Naive thymus-derived CD4-positive, alpha-beta T cell (primary cell): ENCODE measurements at regions of chr2 and their contacts with region 1.

Region 1: DNA sequence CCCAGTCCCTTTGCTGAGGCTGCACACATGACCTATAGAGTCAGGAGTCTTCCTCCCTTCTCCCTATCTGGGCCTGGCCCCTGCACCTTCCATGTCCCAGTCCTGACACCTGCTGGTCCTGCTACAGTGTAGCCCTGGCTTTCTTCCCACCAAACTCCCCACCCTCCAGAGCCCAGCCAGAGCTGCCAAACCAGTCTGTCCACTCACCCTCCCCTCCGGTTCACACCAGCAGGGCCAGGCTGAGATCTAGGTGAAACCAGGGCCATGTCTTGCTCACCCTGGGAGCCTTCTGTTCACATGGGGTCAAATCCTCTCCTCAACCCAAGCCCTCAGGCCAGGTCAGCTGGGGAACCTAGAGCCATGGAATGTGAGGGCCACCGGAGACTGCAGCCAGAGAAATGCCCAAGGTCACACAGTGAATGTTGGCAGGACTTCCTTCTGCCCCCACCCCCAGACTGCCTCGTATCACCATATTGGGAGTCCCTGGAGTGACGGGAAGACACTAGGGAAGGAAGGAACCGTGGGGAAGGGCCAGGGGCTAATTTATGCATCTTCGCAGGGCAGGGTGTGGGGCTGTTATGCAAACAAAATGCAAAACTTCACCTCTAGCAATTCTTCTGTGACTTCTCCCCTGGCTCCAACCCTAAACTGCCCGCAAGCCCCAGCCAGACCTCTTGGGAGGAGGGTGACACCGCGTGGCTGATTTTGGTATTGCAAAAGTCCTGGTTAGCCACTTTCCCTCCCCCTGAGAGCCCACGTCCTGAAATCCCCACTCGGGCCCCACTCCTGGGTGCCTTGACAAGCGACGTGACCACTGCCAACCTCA is 14.6 kb downstream of the TNS1 start:
- DNase-seq: peak in 7 of 9 donors; percentile 14 to 74 (median 31)
- ATAC-seq: peak; percentile 77
- H3K4me3 ChIP-seq: no peak overlapping the region
- H3K4me3 Mint-ChIP-seq: no peak overlapping the region
- H3K27ac ChIP-seq: no peak overlapping the region
- H3K27ac Mint-ChIP-seq: no peak overlapping the region
- H3K4me1 ChIP-seq: no peaks in the 10 kb centered on the region
- H3K4me1 Mint-ChIP-seq: peaks cover 0 to 10% (median 0%) of the 10 kb centered on the region in 7 donors
- H3K27me3 ChIP-seq: no peaks in the 10 kb centered on the region
- H3K27me3 Mint-ChIP-seq: peaks cover 2 to 11% (median 7%) of the 10 kb centered on the region in 5 donors

Region 2: DNA sequence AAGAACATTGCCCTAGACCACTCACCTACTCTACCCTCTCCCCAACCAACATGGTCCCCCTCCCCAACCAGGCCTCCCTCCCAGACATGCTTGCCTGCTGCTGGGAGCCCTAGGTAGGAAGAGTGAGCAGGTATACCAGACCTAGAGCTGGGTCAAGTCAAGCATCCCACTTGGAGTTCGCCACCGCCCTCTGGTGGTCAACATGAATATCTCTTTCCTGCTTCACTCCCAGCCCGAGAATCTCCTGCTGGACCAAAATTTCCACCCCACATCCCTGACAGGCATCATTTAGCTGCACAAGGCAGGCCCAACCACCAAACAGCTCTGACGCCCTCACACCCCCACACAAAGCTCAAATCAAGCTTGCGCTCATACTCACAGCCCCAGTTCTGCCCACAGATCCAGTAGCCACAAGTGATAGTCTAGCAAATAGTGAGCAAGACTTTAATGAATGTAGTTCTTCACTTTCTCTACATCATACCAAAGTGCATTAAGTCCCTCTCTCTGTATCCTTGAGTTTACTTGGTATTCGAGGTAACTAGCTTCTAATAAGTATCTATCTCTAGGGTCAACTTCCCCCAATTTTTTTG is 101.4 kb before region 1 on chr2:
- CTCF ChIA-PET with region 1: no interaction called
- POLR2A ChIA-PET with region 1: no interaction called
- intact Hi-C with region 1: loop called in 1 of 2 experiments (anchors 1 kb)
- DNase-seq: peak; percentile 11 to 58 (median 41)
- ATAC-seq: peak; percentile 69
- H3K4me3 ChIP-seq: no peak overlapping the region
- H3K4me3 Mint-ChIP-seq: no peak overlapping the region
- H3K27ac ChIP-seq: no peak overlapping the region
- H3K27ac Mint-ChIP-seq: no peak overlapping the region
- H3K4me1 ChIP-seq: no peaks in the 10 kb centered on the region
- H3K4me1 Mint-ChIP-seq: peaks cover 0 to 4% (median 0%) of the 10 kb centered on the region in 7 donors
- H3K27me3 ChIP-seq: no peaks in the 10 kb centered on the region
- H3K27me3 Mint-ChIP-seq: peaks cover 0 to 9% (median 0%) of the 10 kb centered on the region in 5 donors

Region 3: GRCh38 chr2:217899231-217900009 is 88.8 kb before region 1 on chr2:
- CTCF ChIA-PET with region 1: no interaction called
- POLR2A ChIA-PET with region 1: no interaction called
- intact Hi-C with region 1: no loop called
- DNase-seq: no peak
- ATAC-seq: peak; percentile 56
- H3K4me3 ChIP-seq: no peak overlapping the region
- H3K4me3 Mint-ChIP-seq: no peak overlapping the region
- H3K27ac ChIP-seq: no peak overlapping the region
- H3K27ac Mint-ChIP-seq: no peak overlapping the region
- H3K4me1 ChIP-seq: no peaks in the 10 kb centered on the region
- H3K4me1 Mint-ChIP-seq: no peaks in the 10 kb centered on the region
- H3K27me3 ChIP-seq: no peaks in the 10 kb centered on the region
- H3K27me3 Mint-ChIP-seq: peaks cover 1 to 12% (median 9%) of the 10 kb centered on the region in 5 donors

Region 4: DNA sequence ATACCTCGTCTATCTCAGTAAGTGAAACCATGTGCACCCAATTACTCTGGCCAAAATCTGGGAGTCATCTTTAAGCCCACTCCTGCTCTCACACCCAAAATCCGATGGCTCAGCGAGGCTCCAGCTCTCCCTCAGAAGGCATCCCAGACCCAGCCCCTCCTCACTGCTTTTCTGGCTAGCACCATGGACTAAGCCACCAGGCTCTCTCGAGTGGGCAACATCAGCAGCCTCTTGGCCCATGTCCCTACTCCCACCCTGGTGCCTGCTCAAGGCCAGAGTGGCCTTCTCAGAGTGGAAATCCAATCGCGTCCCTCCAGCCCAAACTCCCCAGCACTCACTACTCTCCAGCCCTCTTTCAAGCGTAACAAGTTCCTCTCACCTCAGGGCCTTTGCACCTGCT is 12.6 kb before region 1 on chr2:
- CTCF ChIA-PET with region 1: no interaction called
- POLR2A ChIA-PET with region 1: no interaction called
- intact Hi-C with region 1: no loop called
- DNase-seq: no peak
- ATAC-seq: no peak
- H3K4me3 ChIP-seq: no peak overlapping the region
- H3K4me3 Mint-ChIP-seq: no peak overlapping the region
- H3K27ac ChIP-seq: no peak overlapping the region
- H3K27ac Mint-ChIP-seq: no peak overlapping the region
- H3K4me1 ChIP-seq: no peaks in the 10 kb centered on the region
- H3K4me1 Mint-ChIP-seq: no peaks in the 10 kb centered on the region
- H3K27me3 ChIP-seq: no peaks in the 10 kb centered on the region
- H3K27me3 Mint-ChIP-seq: peaks cover 0 to 12% (median under 1%) of the 10 kb centered on the region in 5 donors

Region 5: GRCh38 chr2:218063486-218063885 is 75.3 kb after region 1 on chr2:
- CTCF ChIA-PET with region 1: no interaction called
- POLR2A ChIA-PET with region 1: no interaction called
- intact Hi-C with region 1: loop called in 1 of 2 experiments (anchors 1 kb)
- DNase-seq: no peak
- ATAC-seq: peak; percentile 88
- H3K4me3 ChIP-seq: no peak overlapping the region
- H3K4me3 Mint-ChIP-seq: no peak overlapping the region
- H3K27ac ChIP-seq: no peak overlapping the region
- H3K27ac Mint-ChIP-seq: no peak overlapping the region
- H3K4me1 ChIP-seq: peaks cover 0 to under 1% of the 10 kb centered on the region in 2 donors
- H3K4me1 Mint-ChIP-seq: peaks cover 0 to 14% (median under 1%) of the 10 kb centered on the region in 7 donors
- H3K27me3 ChIP-seq: no peaks in the 10 kb centered on the region
- H3K27me3 Mint-ChIP-seq: peaks cover 4 to 20% (median 19%) of the 10 kb centered on the region in 5 donors